RWPE1 (cell line): ENCODE measurements at regions of chr4 and their contacts with region 1.

Region 1: DNA sequence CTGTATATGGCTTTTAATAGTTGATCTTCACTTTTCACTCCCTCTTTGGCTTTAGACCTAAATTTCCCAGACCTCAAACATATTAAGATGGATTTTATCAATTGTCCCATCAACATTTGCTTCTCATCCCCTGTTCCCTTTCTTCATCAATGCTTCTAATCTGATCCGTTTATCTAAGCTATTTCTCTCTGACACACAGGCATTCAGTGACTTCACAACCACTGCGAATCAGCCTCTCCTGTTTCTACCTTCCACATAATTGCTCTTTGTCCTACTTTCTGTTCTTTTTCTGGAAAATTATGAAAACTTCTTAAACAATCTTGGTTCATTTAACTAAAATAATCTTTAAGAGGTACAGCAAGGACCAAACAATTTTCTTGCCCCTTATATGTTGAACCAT is 115.2 kb downstream of the GLRA3 start:
- DNase-seq: no peak
- H3K27ac ChIP-seq: no peak overlapping the region
- CTCF ChIP-seq: no peak

Region 2: GRCh38 chr4:174734181-174734580 is 20.4 kb after region 1 on chr4:
- CTCF ChIA-PET with region 1: interaction called, 11 read pairs
- POLR2A ChIA-PET with region 1: no interaction called
- DNase-seq: no peak
- H3K27ac ChIP-seq: no peak overlapping the region
- CTCF ChIP-seq: no peak